PC-3 (cell line): ENCODE measurements at regions of chr18 and their contacts with region 1.

Region 1: GRCh38 chr18:59690996-59691395 is 6.2 kb downstream of the CCBE1 start:
- DNase-seq: peak; percentile 94
- ATAC-seq: peak; percentile 91
- H3K4me3 ChIP-seq: peak overlapping the region; percentile 19; the same call in 1 of the 2 replicates
- H3K27ac ChIP-seq: peak overlapping the region; percentile 79
- H3K4me1 ChIP-seq: peaks cover 49% of the 10 kb centered on the region
- H3K27me3 ChIP-seq: no peaks in the 10 kb centered on the region
- CTCF ChIP-seq: no peak

Region 2: DNA sequence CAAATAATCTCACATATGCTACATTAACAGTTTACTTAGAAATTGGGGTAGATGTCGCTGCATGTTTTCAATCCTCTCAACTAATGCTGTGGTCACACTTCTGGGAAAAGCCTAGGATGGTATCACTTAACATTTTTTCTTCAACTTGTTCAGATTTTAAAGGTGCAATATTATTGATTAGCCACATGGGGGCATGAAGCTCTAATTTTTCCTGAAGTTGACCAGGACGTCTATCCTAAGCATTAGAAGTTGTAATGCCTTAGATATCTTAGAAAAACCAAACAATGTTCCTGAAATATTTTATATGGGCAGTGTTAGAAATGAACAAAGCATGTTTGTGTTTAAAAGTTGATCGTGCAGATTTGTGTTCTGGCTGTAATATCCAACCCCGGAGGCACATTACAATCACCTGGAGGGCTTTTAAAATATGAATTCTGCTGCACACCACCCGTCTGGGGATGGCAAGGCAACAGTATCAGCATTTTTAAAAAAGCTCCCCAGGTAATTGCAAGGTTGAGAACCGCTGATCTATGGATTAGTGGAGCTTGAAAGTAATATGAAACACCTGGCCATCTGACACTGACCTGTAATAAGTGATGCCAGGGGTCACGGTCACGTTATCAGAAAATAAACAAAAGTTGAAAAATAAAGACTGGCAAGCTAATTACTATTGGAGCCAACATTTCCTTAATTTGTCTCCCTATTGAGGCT is 231.5 kb before region 1 on chr18:
- CTCF ChIA-PET with region 1: no interaction called
- POLR2A ChIA-PET with region 1: no interaction called
- intact Hi-C with region 1: loop called (anchors 5 kb)
- DNase-seq: peak; percentile 43
- ATAC-seq: peak; percentile 58
- H3K4me3 ChIP-seq: no peak overlapping the region
- H3K27ac ChIP-seq: no peak overlapping the region
- H3K4me1 ChIP-seq: no peaks in the 10 kb centered on the region
- H3K27me3 ChIP-seq: no peaks in the 10 kb centered on the region
- CTCF ChIP-seq: peak; percentile 77

Region 3: DNA sequence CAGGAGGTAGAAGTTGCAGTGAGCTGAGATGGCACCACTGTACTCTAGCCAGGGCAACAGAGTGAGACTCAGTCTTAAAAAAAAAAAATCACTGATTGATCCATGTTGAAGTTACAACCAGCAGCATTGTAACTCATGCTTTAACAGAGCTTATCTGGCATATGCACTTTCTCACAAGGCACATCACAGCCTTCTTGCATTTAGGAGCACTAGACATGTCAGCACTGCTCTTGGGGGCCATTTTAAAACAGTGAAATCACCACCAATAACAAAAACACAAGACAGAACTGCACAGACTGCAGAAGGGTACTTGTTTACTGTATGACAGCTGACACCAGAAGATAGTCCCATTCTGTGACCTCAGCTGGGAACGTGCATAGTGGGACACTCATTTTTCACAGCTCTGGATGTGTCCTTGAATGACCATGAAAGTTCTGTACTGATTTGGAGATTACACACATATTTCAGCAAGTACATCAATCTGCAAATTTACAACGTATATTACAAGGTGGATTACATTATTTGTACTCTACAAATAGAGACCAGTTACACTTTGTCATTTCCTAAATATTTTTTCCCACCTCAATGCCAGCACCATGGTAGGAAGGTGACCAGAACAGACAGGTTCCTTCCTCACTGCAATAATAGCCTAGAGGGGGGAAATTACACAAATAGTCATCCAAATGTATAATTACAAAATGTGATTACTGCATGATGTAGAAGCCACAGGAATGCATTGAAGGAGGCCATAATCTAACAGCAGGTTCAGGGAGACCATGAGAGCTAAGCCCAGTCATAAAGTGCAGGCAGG is 28.9 kb before region 1 on chr18:
- CTCF ChIA-PET with region 1: no interaction called
- POLR2A ChIA-PET with region 1: interaction called, 5 read pairs
- intact Hi-C with region 1: loop called (anchors 2 kb)
- DNase-seq: peak; percentile 88
- ATAC-seq: peak; percentile 60
- H3K4me3 ChIP-seq: no peak overlapping the region
- H3K27ac ChIP-seq: peak overlapping the region; percentile 80
- H3K4me1 ChIP-seq: peaks cover 49% of the 10 kb centered on the region
- H3K27me3 ChIP-seq: no peaks in the 10 kb centered on the region
- CTCF ChIP-seq: no peak

Region 4: GRCh38 chr18:59842947-59843346 is 152.0 kb after region 1 on chr18:
- CTCF ChIA-PET with region 1: no interaction called
- POLR2A ChIA-PET with region 1: interaction called, 11 read pairs
- intact Hi-C with region 1: no loop called
- DNase-seq: peak; percentile 33
- ATAC-seq: no peak
- H3K4me3 ChIP-seq: no peak overlapping the region
- H3K27ac ChIP-seq: no peak overlapping the region
- H3K4me1 ChIP-seq: peaks cover 21% of the 10 kb centered on the region
- H3K27me3 ChIP-seq: no peaks in the 10 kb centered on the region
- CTCF ChIP-seq: no peak